ENCODE measurements at regions of chr17 and their contacts with region 1.

Region 1: DNA sequence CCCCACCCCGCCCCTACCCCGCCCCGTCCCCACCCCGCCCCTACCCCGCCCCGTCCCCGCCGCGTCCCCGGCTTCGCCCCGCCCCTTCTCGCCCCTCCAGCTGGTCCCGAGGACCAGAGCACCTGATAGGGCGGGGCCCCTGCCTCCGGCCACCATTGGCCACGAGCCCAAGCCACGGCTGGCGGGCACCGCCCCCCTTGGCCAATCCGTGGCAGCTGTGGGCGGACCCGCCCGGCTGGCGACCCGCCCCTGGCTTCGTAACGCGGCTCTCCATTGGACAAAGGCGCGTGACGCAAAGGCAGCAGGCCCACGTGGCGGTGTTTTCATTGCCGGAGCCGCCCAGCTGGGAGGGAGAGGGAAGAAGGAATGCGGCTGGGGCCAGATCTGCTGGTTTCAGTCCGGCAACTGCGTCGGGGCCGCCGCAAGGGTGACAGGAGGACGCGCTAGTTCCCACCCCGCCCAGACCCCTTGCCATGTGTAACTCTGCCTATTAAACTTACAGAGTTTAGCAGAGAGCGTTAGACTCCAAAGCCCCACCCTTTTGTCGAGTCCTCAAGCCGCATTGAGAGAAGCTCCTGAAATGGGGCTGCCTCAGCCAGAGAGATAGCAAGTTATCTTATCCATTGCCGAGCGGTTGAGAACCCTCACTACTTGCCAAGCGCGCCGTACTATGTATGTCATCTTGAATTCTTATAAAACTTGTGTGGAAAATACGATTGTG is 403 bp upstream of the WIPI1 start:
- DNase-seq: peak; percentile 99
- H3K4me3 Mint-ChIP-seq: peak overlapping the region; percentile 88
- H3K27ac Mint-ChIP-seq: peak overlapping the region; percentile 78
- H3K4me1 Mint-ChIP-seq: peaks cover 12% of the 10 kb centered on the region
- H3K27me3 Mint-ChIP-seq: no peaks in the 10 kb centered on the region
- CTCF ChIP-seq: no peak

Region 2: GRCh38 chr17:67959288-67959900 is 498.3 kb before region 1 on chr17:
- CTCF ChIA-PET with region 1: no interaction called
- intact Hi-C with region 1: loop called (anchors 10 kb)
- DNase-seq: no peak
- H3K4me3 Mint-ChIP-seq: no peak overlapping the region
- H3K27ac Mint-ChIP-seq: no peak overlapping the region
- H3K4me1 Mint-ChIP-seq: peaks cover 8% of the 10 kb centered on the region
- H3K27me3 Mint-ChIP-seq: no peaks in the 10 kb centered on the region
- CTCF ChIP-seq: no peak

Region 3: GRCh38 chr17:68435876-68436842 is 21.5 kb before region 1 on chr17:
- CTCF ChIA-PET with region 1: interaction called, 3 read pairs
- intact Hi-C with region 1: loop called (anchors 2 kb)
- DNase-seq: peak; percentile 79
- H3K4me3 Mint-ChIP-seq: no peak overlapping the region
- H3K27ac Mint-ChIP-seq: peak overlapping the region; percentile 50
- H3K4me1 Mint-ChIP-seq: peaks cover 10% of the 10 kb centered on the region
- H3K27me3 Mint-ChIP-seq: no peaks in the 10 kb centered on the region
- CTCF ChIP-seq: peak; percentile 83

Region 4: GRCh38 chr17:68497885-68498319 is 40.2 kb after region 1 on chr17:
- CTCF ChIA-PET with region 1: no interaction called
- intact Hi-C with region 1: no loop called
- DNase-seq: no peak
- H3K4me3 Mint-ChIP-seq: no peak overlapping the region
- H3K27ac Mint-ChIP-seq: no peak overlapping the region
- H3K4me1 Mint-ChIP-seq: no peaks in the 10 kb centered on the region
- H3K27me3 Mint-ChIP-seq: no peaks in the 10 kb centered on the region
- CTCF ChIP-seq: no peak